Activated B cell treated with CpG ODN at 0.5 μM for 24 hours (primary cell): ENCODE measurements at regions of chr1 and their contacts with region 1.

Region 1: GRCh38 chr1:151130987-151131586 is 15.3 kb downstream of the SEMA6C start:
- DNase-seq: peak; percentile 73
- ATAC-seq: peak; percentile 100
- H3K4me3 Mint-ChIP-seq: peak overlapping the region; percentile 84
- H3K27ac Mint-ChIP-seq: peak overlapping the region; percentile 89
- H3K4me1 Mint-ChIP-seq: peaks cover 12% of the 10 kb centered on the region
- H3K27me3 Mint-ChIP-seq: no peaks in the 10 kb centered on the region
- CTCF ChIP-seq: no peak

Region 2: DNA sequence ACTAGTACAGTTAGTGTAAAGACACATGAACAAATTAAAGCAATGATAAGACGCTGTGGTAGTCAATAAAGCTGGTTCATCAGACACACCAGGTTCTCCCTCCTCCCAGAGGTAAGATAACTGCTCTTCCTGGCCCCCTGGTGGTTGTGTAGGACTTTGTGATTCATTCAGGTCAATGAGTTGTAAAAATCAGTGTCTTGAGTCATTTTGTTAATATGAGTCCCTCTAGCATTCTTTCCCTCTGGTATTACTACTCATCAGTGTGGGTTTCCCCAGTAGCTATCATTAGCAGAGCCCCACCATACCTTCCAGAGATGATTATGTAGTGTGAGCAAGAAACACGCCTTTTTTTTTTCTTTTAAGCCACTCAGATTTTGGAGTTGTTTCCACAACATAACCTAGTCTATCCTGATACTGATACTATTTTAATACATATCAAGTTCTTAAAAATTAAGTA is 208.5 kb before region 1 on chr1:
- CTCF ChIA-PET with region 1: no interaction called
- POLR2A ChIA-PET with region 1: no interaction called
- intact Hi-C with region 1: no loop called
- DNase-seq: peak; percentile 23
- ATAC-seq: peak; percentile 55
- H3K4me3 Mint-ChIP-seq: peak overlapping the region; percentile 44
- H3K27ac Mint-ChIP-seq: peak overlapping the region; percentile 79
- H3K4me1 Mint-ChIP-seq: peaks cover 30% of the 10 kb centered on the region
- H3K27me3 Mint-ChIP-seq: no peaks in the 10 kb centered on the region
- CTCF ChIP-seq: peak; percentile 25

Region 3: GRCh38 chr1:151013518-151013917 is 117.6 kb before region 1 on chr1:
- CTCF ChIA-PET with region 1: no interaction called
- POLR2A ChIA-PET with region 1: no interaction called
- intact Hi-C with region 1: no loop called
- DNase-seq: no peak
- ATAC-seq: no peak
- H3K4me3 Mint-ChIP-seq: no peak overlapping the region
- H3K27ac Mint-ChIP-seq: no peak overlapping the region
- H3K4me1 Mint-ChIP-seq: peaks cover 26% of the 10 kb centered on the region
- H3K27me3 Mint-ChIP-seq: no peaks in the 10 kb centered on the region
- CTCF ChIP-seq: no peak

Region 4: GRCh38 chr1:151098126-151098525 is 33.0 kb before region 1 on chr1:
- CTCF ChIA-PET with region 1: interaction called, 5 read pairs
- POLR2A ChIA-PET with region 1: interaction called, 13 read pairs
- intact Hi-C with region 1: no loop called
- DNase-seq: no peak
- ATAC-seq: no peak
- H3K4me3 Mint-ChIP-seq: no peak overlapping the region
- H3K27ac Mint-ChIP-seq: no peak overlapping the region
- H3K4me1 Mint-ChIP-seq: no peaks in the 10 kb centered on the region
- H3K27me3 Mint-ChIP-seq: no peaks in the 10 kb centered on the region
- CTCF ChIP-seq: no peak

Region 5: GRCh38 chr1:151146412-151147140 is 15.5 kb after region 1 on chr1 and contains the start of gene SEMA6C:
- CTCF ChIA-PET with region 1: no interaction called
- POLR2A ChIA-PET with region 1: interaction called, 5 read pairs
- intact Hi-C with region 1: loop called (anchors 1 kb)
- DNase-seq: peak; percentile 80
- ATAC-seq: peak; percentile 100
- H3K4me3 Mint-ChIP-seq: peak within 1 kb of the TSS; percentile 90
- H3K27ac Mint-ChIP-seq: no peak within 1 kb of the TSS
- H3K4me1 Mint-ChIP-seq: peaks cover 18% of the 10 kb centered on the region
- H3K27me3 Mint-ChIP-seq: peaks cover 7% of the 10 kb centered on the region
- CTCF ChIP-seq: no peak
- total RNA-seq, gene SEMA6C: 0.59 and 0.67 TPM in 2 replicates

Region 6: DNA sequence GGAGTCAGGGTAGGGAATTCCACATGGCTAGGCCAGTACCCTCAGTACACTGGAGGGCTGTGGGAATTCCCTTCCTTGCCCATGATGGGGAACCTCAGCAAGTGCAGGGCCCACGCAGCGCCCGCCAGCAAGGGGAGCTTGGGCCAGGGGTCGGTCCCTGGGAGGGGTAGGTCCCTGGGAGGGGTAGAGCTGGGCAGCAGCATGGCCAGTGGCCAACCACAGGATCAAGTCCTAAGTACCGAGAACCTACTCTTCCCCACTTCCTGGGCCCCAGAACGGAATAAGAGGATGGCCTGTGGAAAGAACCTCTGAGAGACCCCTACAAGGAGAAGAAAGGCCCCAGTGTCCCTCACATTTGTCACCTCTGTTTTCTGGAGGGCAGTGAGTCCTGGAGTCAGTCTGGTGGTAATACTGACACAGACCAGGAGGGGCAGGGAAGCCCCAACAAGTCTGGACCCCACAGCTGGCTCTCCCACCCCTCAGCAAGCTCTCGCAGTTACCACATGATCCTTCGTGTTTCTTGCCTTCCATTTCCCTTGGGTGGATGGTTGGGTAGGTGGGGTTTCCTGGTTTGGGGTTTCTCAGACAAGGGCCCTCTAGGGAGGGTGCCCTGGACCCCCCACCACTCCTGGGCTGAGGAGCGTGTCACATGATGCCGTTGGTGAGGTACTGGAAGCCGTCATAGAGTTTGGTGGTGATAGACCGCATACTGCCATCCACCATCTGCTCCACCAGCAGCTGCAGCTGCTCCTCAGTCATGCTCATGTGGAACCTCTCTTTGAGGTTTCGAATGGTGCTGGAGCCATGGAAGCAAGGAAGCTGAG is 161.3 kb after region 1 on chr1:
- CTCF ChIA-PET with region 1: no interaction called
- POLR2A ChIA-PET with region 1: no interaction called
- intact Hi-C with region 1: no loop called
- DNase-seq: no peak
- ATAC-seq: peak; percentile 51
- H3K4me3 Mint-ChIP-seq: no peak overlapping the region
- H3K27ac Mint-ChIP-seq: peak overlapping the region; percentile 65
- H3K4me1 Mint-ChIP-seq: peaks cover 13% of the 10 kb centered on the region
- H3K27me3 Mint-ChIP-seq: no peaks in the 10 kb centered on the region
- CTCF ChIP-seq: no peak